K562 (cell line): ENCODE measurements at regions of chr7 and their contacts with region 1.

Region 1: GRCh38 chr7:137606061-137606674 is 240.6 kb downstream of the DGKI start:
- DNase-seq: peak in 3 of 4 experiments; percentile 32 to 54 (median 42)
- ATAC-seq: peak; percentile 78
- H3K4me3 ChIP-seq: no peak overlapping the region
- H3K27ac ChIP-seq: no peak overlapping the region
- H3K4me1 ChIP-seq: no peaks in the 10 kb centered on the region
- H3K27me3 ChIP-seq: peaks cover 0 to 2% of the 10 kb centered on the region in 2 experiments; a peak in 1 of 5 replicates
- CTCF ChIP-seq: peak in 2 of 3 experiments; percentile 20 to 67; a peak in 4 of 6 replicates
- EP300 ChIP-seq: no peak
- POLR2A ChIP-seq: no peak
- RAD21 ChIP-seq: peak; percentile 58 to 59

Region 2: GRCh38 chr7:137626469-137627067 is 20.4 kb after region 1 on chr7:
- CTCF ChIA-PET with region 1: interaction called, 19 read pairs
- POLR2A ChIA-PET with region 1: interaction called, 3 read pairs
- in situ Hi-C with region 1: no loop called
- intact Hi-C with region 1: loop called (anchors 1 kb)
- DNase-seq: peak; percentile 81 to 87 (median 84)
- ATAC-seq: peak; percentile 97
- H3K4me3 ChIP-seq: no peak overlapping the region
- H3K27ac ChIP-seq: no peak overlapping the region
- H3K4me1 ChIP-seq: no peaks in the 10 kb centered on the region
- H3K27me3 ChIP-seq: peaks cover 0 to 3% of the 10 kb centered on the region in 2 experiments; a peak in 2 of 5 replicates
- CTCF ChIP-seq: peak; percentile 80 to 91 (median 86)
- EP300 ChIP-seq: no peak
- POLR2A ChIP-seq: no peak
- RAD21 ChIP-seq: peak; percentile 61 to 77

Region 3: DNA sequence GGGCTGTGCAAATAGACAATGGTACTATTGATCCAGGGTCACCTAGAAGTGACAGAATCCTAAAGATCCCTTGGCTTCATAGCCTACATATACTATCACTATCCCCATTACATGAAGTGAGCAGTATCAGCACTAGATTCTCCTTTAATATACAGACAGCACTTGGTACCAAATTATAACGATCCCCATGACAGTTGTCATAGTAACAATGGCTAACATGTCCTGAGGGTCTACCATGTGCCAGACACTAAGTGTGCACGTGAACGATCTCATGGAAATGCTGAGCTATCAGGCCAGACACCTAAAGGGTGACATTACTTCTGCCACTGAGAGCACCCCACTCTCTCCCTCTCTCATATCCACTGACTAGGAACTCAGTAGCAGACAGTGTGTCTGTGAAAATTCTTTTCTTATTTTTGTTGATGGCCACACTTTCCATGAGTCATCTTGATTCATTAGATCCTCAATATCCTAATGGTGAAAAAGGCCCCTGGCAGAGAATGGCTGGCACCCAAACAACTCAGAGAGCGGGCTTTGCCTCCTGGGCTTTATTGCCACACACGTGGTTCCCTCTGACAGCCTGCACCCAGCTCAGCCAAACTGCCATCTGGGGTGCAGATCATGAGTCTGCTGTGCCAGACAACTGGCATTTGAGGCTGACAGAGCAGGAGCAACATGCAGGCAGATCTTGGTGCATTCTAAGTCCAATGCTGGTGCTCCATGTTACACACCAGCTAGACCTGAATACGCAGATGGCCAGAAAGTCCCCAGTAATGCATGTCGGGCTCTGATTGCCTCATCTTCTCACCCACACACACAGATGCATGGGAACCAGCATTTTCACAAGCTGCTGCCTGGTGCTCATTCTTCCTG is 64.3 kb after region 1 on chr7:
- CTCF ChIA-PET with region 1: no interaction called
- POLR2A ChIA-PET with region 1: no interaction called
- in situ Hi-C with region 1: no loop called
- intact Hi-C with region 1: no loop called
- DNase-seq: no peak
- ATAC-seq: no peak
- H3K4me3 ChIP-seq: no peak overlapping the region
- H3K27ac ChIP-seq: no peak overlapping the region
- H3K4me1 ChIP-seq: no peaks in the 10 kb centered on the region
- H3K27me3 ChIP-seq: peaks cover 18 to 25% of the 10 kb centered on the region in 2 experiments
- CTCF ChIP-seq: no peak
- EP300 ChIP-seq: no peak
- POLR2A ChIP-seq: no peak
- RAD21 ChIP-seq: no peak

Region 4: GRCh38 chr7:137681657-137682562 is 75.7 kb after region 1 on chr7:
- CTCF ChIA-PET with region 1: no interaction called
- POLR2A ChIA-PET with region 1: no interaction called
- in situ Hi-C with region 1: no loop called
- intact Hi-C with region 1: no loop called
- DNase-seq: no peak
- ATAC-seq: no peak
- H3K4me3 ChIP-seq: no peak overlapping the region
- H3K27ac ChIP-seq: no peak overlapping the region
- H3K4me1 ChIP-seq: no peaks in the 10 kb centered on the region
- H3K27me3 ChIP-seq: peaks cover 0 to 6% of the 10 kb centered on the region in 2 experiments; a peak in 1 of 5 replicates
- CTCF ChIP-seq: no peak
- EP300 ChIP-seq: no peak
- POLR2A ChIP-seq: no peak
- RAD21 ChIP-seq: no peak

Region 5: DNA sequence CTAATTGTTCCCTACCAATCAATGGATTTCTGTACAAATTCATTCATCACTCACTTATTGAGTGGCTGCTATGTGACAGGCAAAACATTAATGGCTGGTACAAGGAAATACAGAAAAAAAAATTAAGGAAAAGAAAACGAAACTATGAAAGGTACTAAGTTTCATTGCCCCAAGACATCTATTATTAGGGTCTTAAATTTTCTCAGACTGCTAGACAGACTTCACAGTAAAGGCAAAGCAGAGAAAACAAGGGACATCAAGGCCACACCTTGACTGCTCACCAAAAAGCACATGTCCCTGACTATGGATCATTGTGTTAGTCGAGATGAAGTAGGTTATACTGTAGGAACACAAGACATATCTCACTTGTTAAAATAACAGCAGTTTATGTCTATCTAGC is 204.1 kb after region 1 on chr7:
- CTCF ChIA-PET with region 1: no interaction called
- POLR2A ChIA-PET with region 1: no interaction called
- in situ Hi-C with region 1: no loop called
- intact Hi-C with region 1: loop called (anchors 1 kb)
- DNase-seq: no peak
- ATAC-seq: no peak
- H3K4me3 ChIP-seq: no peak overlapping the region
- H3K27ac ChIP-seq: no peak overlapping the region
- H3K4me1 ChIP-seq: no peaks in the 10 kb centered on the region
- H3K27me3 ChIP-seq: peaks cover 5 to 18% of the 10 kb centered on the region in 2 experiments; a peak in 3 of 5 replicates
- CTCF ChIP-seq: no peak
- EP300 ChIP-seq: no peak
- POLR2A ChIP-seq: no peak
- RAD21 ChIP-seq: no peak

Region 6: DNA sequence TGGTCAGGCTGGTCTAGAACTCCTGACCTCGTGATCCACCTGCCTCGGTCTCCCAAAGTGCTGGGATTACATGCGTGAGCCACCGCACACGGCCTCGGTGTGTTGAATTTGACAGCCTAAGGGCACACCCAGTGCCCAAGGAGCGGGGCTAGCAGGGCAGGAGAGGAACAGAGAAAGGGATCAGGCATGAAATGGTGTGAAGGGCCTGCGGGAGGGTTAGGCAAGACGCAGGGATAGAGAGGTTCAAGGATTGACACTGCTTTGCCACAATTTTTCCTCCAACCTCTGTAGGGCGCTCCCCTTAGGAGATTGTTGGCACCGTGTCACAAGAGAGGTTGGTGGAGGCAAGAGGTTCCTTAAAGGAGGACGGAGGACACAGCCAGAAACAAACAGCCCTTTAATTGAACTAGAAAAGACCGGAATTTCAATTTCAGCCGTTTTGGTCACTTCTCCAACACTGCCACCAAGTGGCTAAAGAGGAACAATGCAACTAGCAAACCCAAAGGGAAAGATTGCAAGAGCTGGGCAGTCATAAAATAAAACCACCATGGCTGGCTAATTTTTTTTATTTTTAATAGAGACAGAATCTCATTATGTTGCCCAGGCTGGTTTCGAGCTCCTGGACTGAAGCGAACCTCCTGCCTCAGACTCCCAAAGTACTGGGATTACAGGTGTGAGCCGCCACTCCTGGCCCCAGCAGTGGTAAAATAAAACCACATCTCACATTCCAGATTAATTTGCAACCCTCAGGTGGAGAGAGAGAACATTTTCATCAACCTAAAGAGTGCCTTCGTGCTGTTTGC is 402.6 kb after region 1 on chr7:
- CTCF ChIA-PET with region 1: interaction called, 3 read pairs
- POLR2A ChIA-PET with region 1: no interaction called
- in situ Hi-C with region 1: no loop called
- intact Hi-C with region 1: loop called (anchors 2 kb)
- DNase-seq: peak; percentile 55 to 84 (median 66)
- ATAC-seq: peak; percentile 76
- H3K4me3 ChIP-seq: no peak overlapping the region
- H3K27ac ChIP-seq: 0 out of 3 replicates have a peak overlapping the region, but pooled peaks have one; percentile 24
- H3K4me1 ChIP-seq: peaks cover 0 to 3% of the 10 kb centered on the region in 2 experiments; a peak in 2 of 5 replicates
- H3K27me3 ChIP-seq: no peaks in the 10 kb centered on the region
- CTCF ChIP-seq: peak; percentile 88 to 98 (median 91)
- EP300 ChIP-seq: no peak
- POLR2A ChIP-seq: no peak
- RAD21 ChIP-seq: peak; percentile 99 to 100